ENCODE measurements at regions of chr20 and their contacts with region 1.

Region 1: DNA sequence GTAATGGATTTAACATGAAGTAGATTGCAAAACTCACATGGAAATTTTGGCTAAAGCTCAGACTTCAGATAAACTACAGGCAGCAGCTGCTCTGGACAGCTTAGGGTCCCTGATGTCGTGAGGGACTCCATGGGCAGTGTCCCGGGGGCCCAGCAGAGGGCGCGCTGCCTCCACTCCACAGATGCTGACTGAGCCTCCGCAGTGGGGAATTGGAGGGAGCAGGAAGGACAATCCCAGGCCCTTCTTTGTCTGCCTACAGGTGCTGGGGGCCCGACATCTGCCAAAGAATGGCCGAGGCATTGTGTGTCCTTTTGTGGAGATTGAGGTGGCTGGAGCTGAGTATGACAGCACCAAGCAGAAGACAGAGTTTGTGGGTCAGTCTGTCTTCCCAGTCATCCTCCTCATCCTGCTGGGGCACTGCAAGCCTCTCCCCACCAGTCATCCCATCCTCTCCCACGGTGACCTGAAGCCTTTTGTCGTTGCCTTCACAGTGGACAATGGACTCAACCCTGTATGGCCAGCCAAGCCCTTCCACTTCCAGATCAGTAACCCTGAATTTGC is 35.9 kb downstream of the PLCG1 start:
- DNase-seq: peak; percentile 38 to 93
- H3K4me3 ChIP-seq: no peak overlapping the region
- H3K27ac ChIP-seq: no peak overlapping the region
- H3K4me1 ChIP-seq: no peaks in the 10 kb centered on the region
- H3K27me3 ChIP-seq: no peaks in the 10 kb centered on the region
- CTCF ChIP-seq: peak; percentile 95 to 98 (median 97)
- EP300 ChIP-seq: no peak
- POLR2A ChIP-seq: 0 out of 3 replicates have a peak, but pooled peaks of 1 of the 2 experiments have one; percentile 29
- RAD21 ChIP-seq: peak; percentile 94 to 98

Region 2: GRCh38 chr20:41110930-41111577 is 62.2 kb before region 1 on chr20:
- CTCF ChIA-PET with region 1: no interaction called
- POLR2A ChIA-PET with region 1: no interaction called
- DNase-seq: no peak
- H3K4me3 ChIP-seq: no peak overlapping the region
- H3K27ac ChIP-seq: no peak overlapping the region
- H3K4me1 ChIP-seq: no peaks in the 10 kb centered on the region
- H3K27me3 ChIP-seq: no peaks in the 10 kb centered on the region
- CTCF ChIP-seq: no peak
- EP300 ChIP-seq: no peak
- POLR2A ChIP-seq: no peak
- RAD21 ChIP-seq: no peak

Region 3: DNA sequence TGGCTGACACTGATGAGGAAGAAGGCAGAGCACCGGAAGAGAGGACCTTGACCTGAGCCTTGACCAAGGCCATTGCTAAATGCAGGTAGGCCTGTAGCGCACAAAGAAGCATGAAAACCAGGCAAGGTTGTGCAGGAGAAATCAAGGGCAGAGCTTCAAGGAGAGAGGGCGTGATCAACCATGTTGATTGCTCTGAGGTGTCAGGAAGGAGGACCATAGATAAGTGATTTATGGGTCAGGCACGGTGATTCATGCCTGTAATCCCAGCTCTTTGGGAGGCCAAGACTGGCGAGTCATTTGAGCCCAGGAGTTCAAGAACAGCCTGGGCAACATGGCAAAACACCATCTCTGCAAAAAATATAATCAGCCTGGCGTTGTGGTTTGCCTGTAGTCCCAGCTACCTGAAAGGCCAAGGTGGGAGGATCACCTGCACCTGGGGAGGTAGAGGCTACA is 23.5 kb before region 1 on chr20:
- CTCF ChIA-PET with region 1: interaction called, 40 read pairs
- POLR2A ChIA-PET with region 1: interaction called, 7 read pairs
- DNase-seq: no peak
- H3K4me3 ChIP-seq: no peak overlapping the region
- H3K27ac ChIP-seq: no peak overlapping the region
- H3K4me1 ChIP-seq: peaks cover 0 to 14% (median 7%) of the 10 kb centered on the region in 4 experiments; a peak in 3 of 7 replicates
- H3K27me3 ChIP-seq: no peaks in the 10 kb centered on the region
- CTCF ChIP-seq: no peak
- EP300 ChIP-seq: no peak
- POLR2A ChIP-seq: no peak
- RAD21 ChIP-seq: no peak

Region 4: GRCh38 chr20:41161886-41162285 is 11.4 kb before region 1 on chr20:
- CTCF ChIA-PET with region 1: interaction called, 47 read pairs
- POLR2A ChIA-PET with region 1: interaction called, 4 read pairs
- DNase-seq: no peak
- H3K4me3 ChIP-seq: no peak overlapping the region
- H3K27ac ChIP-seq: no peak overlapping the region
- H3K4me1 ChIP-seq: peaks cover 0 to 4% (median 1%) of the 10 kb centered on the region in 4 experiments; a peak in 3 of 7 replicates
- H3K27me3 ChIP-seq: no peaks in the 10 kb centered on the region
- CTCF ChIP-seq: no peak
- EP300 ChIP-seq: no peak
- POLR2A ChIP-seq: no peak
- RAD21 ChIP-seq: no peak

Region 5: DNA sequence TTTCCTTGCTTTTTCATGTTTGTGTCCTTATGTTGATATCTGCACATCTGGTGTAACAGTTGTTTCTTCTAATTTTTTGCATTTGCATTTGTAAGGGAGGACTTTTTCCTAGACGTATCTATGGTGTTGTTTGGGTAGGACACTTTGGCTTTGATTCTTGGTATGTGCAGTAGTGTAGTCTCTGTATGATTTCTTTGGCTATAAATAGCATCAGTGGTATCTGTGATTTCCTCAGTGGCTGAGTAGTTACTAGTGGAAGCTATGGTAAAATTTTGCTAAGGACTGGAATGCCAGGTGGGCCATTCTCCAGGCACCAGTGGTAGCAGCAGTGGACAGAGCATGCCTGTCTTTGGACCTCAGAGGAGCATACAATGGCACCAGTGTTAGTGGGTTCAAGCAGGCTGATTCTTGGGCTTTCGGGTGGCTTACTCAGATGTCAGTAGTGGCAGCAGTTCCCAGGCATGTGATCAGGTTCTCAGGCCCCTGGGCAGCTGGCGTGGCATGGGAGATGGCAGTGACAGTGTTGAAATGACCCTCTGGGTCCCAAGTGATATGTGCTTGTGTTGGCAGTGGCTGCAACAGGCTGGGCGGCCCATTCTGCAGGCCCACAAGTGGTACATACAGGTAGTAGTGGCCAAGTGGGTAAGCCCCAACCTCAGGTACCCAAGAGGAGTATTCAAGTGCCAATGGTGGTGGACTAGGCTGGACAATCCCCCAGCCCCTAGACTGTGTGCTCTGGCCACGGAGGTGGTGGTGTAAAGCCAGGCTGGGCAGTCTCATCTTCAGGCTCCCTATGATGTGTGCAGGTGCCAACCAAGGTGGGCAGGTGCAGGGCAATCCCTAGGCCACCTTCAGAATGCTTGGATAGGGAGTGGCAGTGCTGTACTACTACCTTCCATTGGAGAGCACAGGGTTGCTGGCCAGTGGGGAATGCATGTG is 18.6 kb after region 1 on chr20:
- CTCF ChIA-PET with region 1: interaction called, 22 read pairs
- POLR2A ChIA-PET with region 1: interaction called, 3 read pairs
- DNase-seq: peak in 1 of 2 experiments; percentile 19
- H3K4me3 ChIP-seq: no peak overlapping the region
- H3K27ac ChIP-seq: no peak overlapping the region
- H3K4me1 ChIP-seq: no peaks in the 10 kb centered on the region
- H3K27me3 ChIP-seq: no peaks in the 10 kb centered on the region
- CTCF ChIP-seq: no peak
- EP300 ChIP-seq: no peak
- POLR2A ChIP-seq: no peak
- RAD21 ChIP-seq: no peak

Region 6: DNA sequence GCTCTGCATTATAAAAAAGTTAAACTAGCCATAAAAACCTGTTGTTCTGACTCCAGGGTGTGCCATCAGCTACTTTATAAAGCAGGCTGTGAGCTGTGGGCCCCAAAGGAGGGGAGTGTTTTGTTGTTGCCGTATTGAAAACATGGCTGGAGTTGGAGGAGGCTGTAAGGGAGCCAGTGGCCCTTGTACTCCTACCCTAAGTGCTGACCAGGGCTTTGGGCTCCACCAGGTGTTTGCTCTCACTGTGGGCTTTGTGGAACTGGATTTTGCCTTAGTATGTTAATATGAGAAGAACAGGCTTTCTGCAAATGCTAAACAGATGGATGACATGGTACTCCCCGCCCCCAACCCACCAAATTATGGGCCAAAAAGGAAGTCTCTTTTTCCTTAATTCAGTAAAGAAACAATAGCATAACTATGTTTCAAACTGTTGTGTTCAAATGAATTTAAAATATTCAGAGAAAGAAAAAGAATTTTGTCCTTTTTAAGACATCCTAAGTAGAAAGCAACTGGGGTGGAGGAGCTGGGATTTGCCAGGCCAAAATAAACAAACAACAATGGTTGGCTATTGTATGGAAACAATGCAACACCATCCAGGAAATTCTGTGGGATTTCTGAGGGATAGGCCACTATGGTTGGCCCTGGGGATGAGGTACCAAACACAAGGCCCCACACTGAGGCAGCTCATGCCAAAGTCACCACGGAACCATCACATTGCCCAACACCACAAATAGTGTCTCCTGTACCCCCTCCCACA is 27.4 kb after region 1 on chr20:
- CTCF ChIA-PET with region 1: interaction called, 16 read pairs
- POLR2A ChIA-PET with region 1: interaction called, 4 read pairs
- DNase-seq: no peak
- H3K4me3 ChIP-seq: no peak overlapping the region
- H3K27ac ChIP-seq: no peak overlapping the region
- H3K4me1 ChIP-seq: no peaks in the 10 kb centered on the region
- H3K27me3 ChIP-seq: no peaks in the 10 kb centered on the region
- CTCF ChIP-seq: no peak
- EP300 ChIP-seq: no peak
- POLR2A ChIP-seq: no peak
- RAD21 ChIP-seq: no peak

Region 7: DNA sequence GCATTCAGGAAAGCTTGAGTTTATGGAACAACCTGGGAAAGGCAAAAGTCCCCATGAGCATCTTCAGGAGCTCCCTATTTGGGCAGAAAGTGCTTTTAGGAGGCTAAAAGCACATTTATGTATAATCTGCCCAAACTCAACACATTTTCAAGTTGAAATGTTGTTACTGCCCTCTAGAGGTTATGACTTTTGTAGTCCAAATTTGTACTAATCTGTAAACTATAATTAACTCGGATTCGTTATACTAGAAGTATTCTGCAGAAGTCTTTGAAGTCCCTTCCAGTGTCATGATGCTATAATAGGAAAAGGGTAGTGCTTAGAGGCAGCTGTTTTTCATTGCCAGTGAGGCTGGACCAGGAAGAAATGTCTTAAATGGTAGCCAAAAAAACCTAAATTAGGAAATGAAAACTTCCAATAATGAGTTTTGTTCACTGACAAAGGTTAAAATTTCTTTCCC is 238.2 kb after region 1 on chr20:
- CTCF ChIA-PET with region 1: interaction called, 17 read pairs
- POLR2A ChIA-PET with region 1: no interaction called
- DNase-seq: no peak
- H3K4me3 ChIP-seq: no peak overlapping the region
- H3K27ac ChIP-seq: no peak overlapping the region
- H3K4me1 ChIP-seq: no peaks in the 10 kb centered on the region
- H3K27me3 ChIP-seq: no peaks in the 10 kb centered on the region
- CTCF ChIP-seq: peak in 1 of 3 experiments; percentile 19; a peak in 2 of 4 replicates
- EP300 ChIP-seq: no peak
- POLR2A ChIP-seq: no peak
- RAD21 ChIP-seq: no peak; a peak in 2 of 4 replicates

Measured in H1 (cell line).